SK-N-SH (cell line): ENCODE measurements at regions of chr18 and their contacts with region 1.

Region 1: DNA sequence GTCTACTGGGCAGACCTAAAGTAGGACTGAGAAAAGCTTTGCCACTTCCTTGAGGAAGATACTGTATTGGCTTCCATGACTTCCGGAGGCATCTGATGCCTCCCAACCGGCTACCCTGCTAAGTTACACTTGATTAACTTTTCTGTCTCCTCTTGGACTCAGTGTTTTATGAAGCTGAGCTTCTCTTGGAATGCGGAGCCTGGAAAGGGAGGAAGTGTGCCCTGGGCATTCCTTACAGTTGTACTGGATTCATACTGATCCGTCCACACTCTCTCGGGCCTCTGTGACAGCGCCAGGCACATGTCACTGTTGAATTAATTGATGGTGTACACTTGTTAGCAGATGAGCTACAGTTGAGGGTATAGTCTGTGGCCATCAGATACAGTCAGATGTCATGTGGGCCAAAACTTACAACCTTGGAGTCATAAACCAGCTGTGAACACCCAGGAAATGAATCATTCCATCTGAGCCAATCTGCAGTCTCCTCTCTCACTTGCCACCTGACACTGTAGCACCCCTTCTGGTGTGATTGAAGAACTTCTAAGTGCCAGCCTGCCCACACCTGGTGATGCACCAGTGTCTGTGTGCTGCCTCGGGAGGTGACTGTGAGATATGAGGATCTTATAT is 122.5 kb downstream of the FHOD3 start:
- DNase-seq: no peak
- H3K4me3 ChIP-seq: no peak overlapping the region
- H3K27ac ChIP-seq: peak overlapping the region in 1 of 2 experiments; percentile 25; a peak in 2 of 4 replicates
- H3K4me1 ChIP-seq: peaks cover 0 to 14% of the 10 kb centered on the region in 2 experiments; a peak in 2 of 4 replicates
- H3K27me3 ChIP-seq: no peaks in the 10 kb centered on the region
- CTCF ChIP-seq: peak; percentile 12; the same call in 1 of the 2 replicates
- EP300 ChIP-seq: no peak
- RAD21 ChIP-seq: no peak

Region 2: GRCh38 chr18:36035253-36035652 is 384.8 kb before region 1 on chr18:
- CTCF ChIA-PET with region 1: no interaction called
- POLR2A ChIA-PET with region 1: no interaction called
- DNase-seq: peak; percentile 53
- H3K4me3 ChIP-seq: no peak overlapping the region
- H3K27ac ChIP-seq: peak overlapping the region in 1 of 2 experiments; percentile 93; a peak in 2 of 4 replicates
- H3K4me1 ChIP-seq: peaks cover 10 to 19% of the 10 kb centered on the region in 2 experiments; a peak in 3 of 4 replicates
- H3K27me3 ChIP-seq: no peaks in the 10 kb centered on the region
- CTCF ChIP-seq: no peak
- EP300 ChIP-seq: peak in 1 of 2 experiments; percentile 94; a peak in 2 of 4 replicates
- RAD21 ChIP-seq: peak; percentile 8; the same call in 1 of the 2 replicates

Region 3: GRCh38 chr18:36432880-36433279 is 12.9 kb after region 1 on chr18:
- CTCF ChIA-PET with region 1: interaction called, 14 read pairs
- POLR2A ChIA-PET with region 1: no interaction called
- DNase-seq: no peak
- H3K4me3 ChIP-seq: no peak overlapping the region
- H3K27ac ChIP-seq: no peak overlapping the region
- H3K4me1 ChIP-seq: no peaks in the 10 kb centered on the region; a peak in 2 of 4 replicates
- H3K27me3 ChIP-seq: no peaks in the 10 kb centered on the region
- CTCF ChIP-seq: no peak
- EP300 ChIP-seq: no peak
- RAD21 ChIP-seq: no peak